Activated T-helper 1 cell treated with anti-CD3 and anti-CD28 coated beads, Interleukin-12 subunit alpha, Interleukin-12 subunit beta, Interleukin-2, Interleukin-4 antibody, amounts not matched to agents 30 ng/mL and 10 ng/mL and 1 ng/mL, durations not matched to agents 14 hours and 24 hours and 36 hours (primary cell): ENCODE measurements at regions of chr6 and their contacts with region 1.

Region 1: DNA sequence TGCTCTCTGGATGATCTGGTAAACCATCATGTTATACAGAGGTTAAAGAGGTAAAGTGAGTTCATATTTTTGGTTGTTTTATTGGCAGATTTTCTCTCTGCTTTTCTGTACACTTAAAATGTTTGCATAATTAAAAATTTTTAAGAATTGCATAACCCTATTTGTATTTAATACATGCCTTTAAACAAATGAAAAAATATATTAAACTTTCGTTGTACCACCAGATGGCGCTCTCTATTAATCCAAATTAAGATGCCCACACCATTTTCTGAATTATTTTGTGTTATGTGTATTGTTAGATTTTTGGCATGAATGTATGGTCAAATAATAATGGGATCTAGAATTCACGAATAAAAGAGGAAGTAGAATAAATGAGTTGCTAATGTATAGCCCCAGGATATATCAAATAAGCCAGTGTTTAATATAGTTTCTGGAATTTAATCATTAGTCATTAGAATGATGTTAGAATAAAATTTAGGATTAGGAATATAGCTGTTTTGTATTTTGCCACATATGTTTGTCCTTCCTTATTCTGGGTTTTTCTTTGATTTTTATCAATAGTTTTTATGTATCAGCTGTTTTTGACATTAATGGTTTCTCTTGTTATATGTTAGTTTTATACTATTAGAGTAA is 38.9 kb downstream of the SMAP1 start:
- DNase-seq: no peak
- H3K4me3 Mint-ChIP-seq: no peak overlapping the region
- H3K27ac Mint-ChIP-seq: no peak overlapping the region
- H3K4me1 Mint-ChIP-seq: peaks cover 14% of the 10 kb centered on the region
- H3K27me3 Mint-ChIP-seq: no peaks in the 10 kb centered on the region

Region 2: GRCh38 chr6:68994521-68994920 is 1712.1 kb before region 1 on chr6:
- intact Hi-C with region 1: no loop called
- DNase-seq: no peak
- H3K4me3 Mint-ChIP-seq: no peak overlapping the region
- H3K27ac Mint-ChIP-seq: no peak overlapping the region
- H3K4me1 Mint-ChIP-seq: no peaks in the 10 kb centered on the region
- H3K27me3 Mint-ChIP-seq: no peaks in the 10 kb centered on the region

Region 3: DNA sequence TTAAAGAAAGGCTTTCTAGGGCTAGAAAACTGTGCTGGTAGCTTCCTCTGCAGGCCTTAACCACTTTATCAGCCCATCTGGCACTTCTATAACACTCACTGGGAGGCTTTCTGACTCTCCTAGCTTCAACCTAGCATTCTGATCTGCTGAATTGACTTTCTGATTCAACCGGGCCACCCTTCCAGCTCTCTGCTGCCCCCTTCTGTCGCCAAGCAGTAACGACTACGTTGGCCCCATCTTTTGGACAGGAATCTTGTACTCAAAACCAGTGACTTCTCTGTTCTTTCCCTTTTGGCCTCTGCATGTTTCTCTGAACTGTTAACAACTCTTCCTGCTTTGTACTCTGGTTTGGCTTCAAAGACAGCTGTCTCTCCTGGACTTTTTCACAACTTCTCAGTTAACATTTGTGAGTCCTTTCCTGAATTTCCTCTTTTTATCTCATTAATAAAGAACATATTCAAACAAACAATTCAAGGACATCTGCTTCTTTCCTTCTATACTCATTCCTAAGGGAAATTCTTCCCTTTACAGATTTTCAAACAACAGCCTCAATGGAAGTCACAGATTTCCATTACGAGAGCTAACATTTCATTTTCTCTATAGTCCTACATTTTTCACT is 337.2 kb before region 1 on chr6:
- intact Hi-C with region 1: no loop called
- DNase-seq: peak; percentile 43
- H3K4me3 Mint-ChIP-seq: no peak overlapping the region
- H3K27ac Mint-ChIP-seq: no peak overlapping the region
- H3K4me1 Mint-ChIP-seq: no peaks in the 10 kb centered on the region
- H3K27me3 Mint-ChIP-seq: peaks cover 24% of the 10 kb centered on the region

Region 4: GRCh38 chr6:70763754-70764510 is 57.3 kb after region 1 on chr6:
- intact Hi-C with region 1: no loop called
- DNase-seq: no peak
- H3K4me3 Mint-ChIP-seq: no peak overlapping the region
- H3K27ac Mint-ChIP-seq: no peak overlapping the region
- H3K4me1 Mint-ChIP-seq: no peaks in the 10 kb centered on the region
- H3K27me3 Mint-ChIP-seq: no peaks in the 10 kb centered on the region

Region 5: GRCh38 chr6:71288228-71289001 is 581.8 kb after region 1 on chr6 and contains the start of gene OGFRL1:
- intact Hi-C with region 1: loop called (anchors 10 kb)
- DNase-seq: peak; percentile 65
- H3K4me3 Mint-ChIP-seq: peak within 1 kb of the TSS; percentile 84
- H3K27ac Mint-ChIP-seq: peak within 1 kb of the TSS; percentile 52
- H3K4me1 Mint-ChIP-seq: peaks cover 39% of the 10 kb centered on the region
- H3K27me3 Mint-ChIP-seq: peaks cover 6% of the 10 kb centered on the region
- total RNA-seq, gene OGFRL1: 4.2 and 4.8 TPM in 2 replicates